ENCODE measurements at regions of chr4 and their contacts with region 1.

Region 1: GRCh38 chr4:105471566-105472176 is 2.2 kb downstream of the PPA2 start:
- DNase-seq: peak; percentile 62
- CTCF ChIP-seq: peak; percentile 75

Region 2: DNA sequence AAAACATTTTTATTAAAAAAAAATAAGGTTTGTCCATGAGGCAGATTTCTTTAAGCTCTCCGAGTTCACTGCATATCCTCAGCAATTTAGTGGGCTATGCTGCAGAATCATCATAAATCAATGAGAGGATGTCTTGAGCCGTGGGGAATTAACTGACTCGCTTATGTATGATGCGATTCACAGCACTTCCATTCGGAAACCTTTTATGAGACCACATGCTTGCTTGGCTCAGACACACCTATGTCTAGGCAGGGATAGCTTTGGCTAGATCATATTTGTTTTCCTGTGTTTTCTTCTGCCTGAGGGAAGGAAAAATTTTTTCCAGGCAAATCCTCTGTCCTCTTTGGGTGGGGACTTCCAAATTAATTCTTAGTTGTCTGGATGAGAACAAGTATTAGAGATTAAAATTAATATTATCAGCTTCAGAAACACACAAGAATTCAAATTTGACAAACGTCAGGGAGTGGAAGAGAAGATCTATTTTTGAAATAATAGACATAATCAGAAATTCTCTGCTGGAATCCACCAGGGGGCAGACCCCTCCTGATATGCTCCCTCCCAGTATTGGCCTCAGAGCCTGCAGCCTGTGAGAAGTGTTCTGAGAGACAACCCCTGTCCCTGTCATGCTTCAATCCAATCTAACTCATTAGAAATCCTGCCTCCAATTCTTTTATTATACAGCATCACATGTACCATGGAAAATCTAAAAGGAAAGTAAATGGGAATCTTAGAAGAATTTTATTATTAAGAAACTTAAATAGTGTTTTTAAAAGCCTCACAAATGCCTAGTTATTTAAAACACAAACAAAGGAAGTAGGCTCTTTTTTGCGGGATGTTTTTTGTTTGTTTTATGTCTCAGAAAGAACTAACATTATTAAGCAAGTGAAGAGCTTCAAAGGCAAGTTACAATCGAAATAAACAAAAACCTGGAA is 1406.8 kb before region 1 on chr4:
- in situ Hi-C with region 1: loop called (anchors 25 kb)
- DNase-seq: peak; percentile 4
- CTCF ChIP-seq: peak; percentile 46

Region 3: GRCh38 chr4:104490770-104491480 is 980.7 kb before region 1 on chr4:
- in situ Hi-C with region 1: loop called (anchors 25 kb)
- DNase-seq: peak; percentile 47
- CTCF ChIP-seq: no peak

Region 4: GRCh38 chr4:104966349-104967033 is 505.2 kb before region 1 on chr4:
- in situ Hi-C with region 1: loop called (anchors 25 kb)
- DNase-seq: peak; percentile 55
- CTCF ChIP-seq: no peak

Region 5: GRCh38 chr4:105146276-105147015 is 325.2 kb before region 1 on chr4 and contains the start of gene TET2:
- in situ Hi-C with region 1: loop called (anchors 25 kb)
- DNase-seq: peak; percentile 89
- CTCF ChIP-seq: no peak

Region 6: GRCh38 chr4:106126062-106126461 is 654.4 kb after region 1 on chr4:
- in situ Hi-C with region 1: no loop called
- DNase-seq: no peak
- CTCF ChIP-seq: no peak

Measured in GM13976 (cell line).